ENCODE measurements at regions of chr1 and their contacts with region 1.

Region 1: DNA sequence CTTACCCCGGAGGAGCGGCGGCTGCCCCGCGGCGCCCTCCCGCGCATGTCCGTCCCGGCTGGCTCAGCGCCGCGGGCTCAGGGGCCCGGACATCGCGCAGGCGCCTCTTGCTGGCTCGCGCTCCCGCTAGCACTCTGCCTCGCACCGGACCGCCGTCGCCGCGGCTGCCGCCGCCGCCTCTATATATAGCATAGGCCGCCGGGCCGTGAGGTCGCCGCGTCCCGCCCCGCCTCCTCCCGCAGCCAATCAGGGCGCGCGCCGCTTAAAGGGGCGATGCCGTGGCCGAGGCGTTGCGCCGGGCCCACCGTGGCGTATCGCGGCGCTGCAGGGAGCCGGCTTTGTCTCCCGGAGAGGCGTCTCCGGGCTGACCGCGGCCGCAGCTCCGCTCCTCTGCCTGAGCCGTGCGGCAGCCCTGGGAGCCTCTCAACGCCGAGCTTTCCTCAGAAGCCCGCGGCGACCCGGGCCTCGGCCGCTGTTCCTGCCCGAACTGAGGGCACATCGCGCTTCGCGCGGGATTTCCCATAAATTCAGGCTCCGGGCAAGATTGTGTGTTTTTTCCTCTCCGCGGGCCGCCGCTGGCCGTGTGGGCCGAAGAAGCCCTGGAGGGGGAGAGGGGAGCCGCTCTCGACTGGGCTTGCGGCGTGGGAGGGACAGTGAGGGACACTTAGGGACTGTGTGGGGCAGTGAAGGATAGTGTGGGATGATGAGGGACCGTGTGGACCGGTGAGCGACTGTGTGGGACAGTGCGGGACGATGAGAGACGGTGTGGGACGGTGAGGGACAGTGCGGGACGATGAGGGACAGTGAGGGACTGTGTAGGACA is at the start of gene ERRFI1:
- DNase-seq: no peak
- H3K4me3 ChIP-seq: peak within 1 kb of the TSS; percentile 68
- H3K27me3 ChIP-seq: no peaks in the 10 kb centered on the region
- CTCF ChIP-seq: no peak
- polyA plus RNA-seq, gene ERRFI1: 20.5 and 30.3 TPM in 2 replicates

Region 2: DNA sequence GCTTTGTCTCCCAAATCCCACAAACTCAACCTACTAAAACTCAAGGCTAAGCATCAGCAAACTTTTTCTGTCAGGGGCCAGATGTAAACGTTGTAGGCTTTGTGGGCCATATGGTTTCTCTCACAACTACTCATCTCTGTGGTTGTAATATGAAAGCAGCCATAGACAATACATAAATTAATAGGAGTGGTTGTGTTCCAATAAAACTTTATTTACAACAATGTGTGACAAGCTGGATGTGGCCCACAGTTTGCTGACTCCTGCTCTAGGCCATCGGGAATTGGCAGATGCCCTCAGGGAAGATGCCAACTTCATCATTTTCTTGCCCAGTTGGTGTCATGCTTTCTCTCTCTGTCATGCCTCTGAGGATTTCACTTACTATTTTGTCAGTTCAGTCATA is 17.3 kb after region 1 on chr1:
- CTCF ChIA-PET with region 1: interaction called, 13 read pairs
- POLR2A ChIA-PET with region 1: no interaction called
- DNase-seq: no peak
- H3K4me3 ChIP-seq: no peak overlapping the region
- H3K27me3 ChIP-seq: no peaks in the 10 kb centered on the region
- CTCF ChIP-seq: no peak

Measured in BJ (cell line).